Uterus (tissue), 4 donors: ENCODE measurements at regions of chr13 and their contacts with region 1.

Region 1: GRCh38 chr13:26785838-26786630 is 25.4 kb upstream of the GPR12 start:
- DNase-seq: no peak
- H3K4me3 ChIP-seq: no peak overlapping the region
- H3K27ac ChIP-seq: no peak overlapping the region
- H3K4me1 ChIP-seq: no peaks in the 10 kb centered on the region
- H3K27me3 ChIP-seq: no peaks in the 10 kb centered on the region
- CTCF ChIP-seq: no peak
- POLR2A ChIP-seq: no peak

Region 2: DNA sequence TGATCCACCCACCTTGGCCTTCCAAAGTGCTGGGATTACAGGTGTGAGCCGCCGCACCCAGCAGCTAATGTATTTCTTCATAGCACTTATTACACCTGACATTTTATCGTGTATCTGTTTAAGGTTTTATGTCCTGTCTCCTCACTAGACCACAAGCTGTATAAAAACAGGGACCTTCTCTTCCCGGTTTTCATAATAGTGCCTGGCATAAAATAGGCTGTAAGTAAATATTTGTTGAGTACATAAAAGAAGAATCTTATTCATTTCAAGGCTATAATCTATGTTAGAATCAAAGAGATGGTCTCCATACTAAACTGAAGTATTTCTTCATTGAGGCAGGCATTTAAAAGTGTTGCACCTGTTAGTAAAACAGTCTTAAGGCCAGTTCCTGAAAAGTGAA is 928.2 kb before region 1 on chr13:
- intact Hi-C with region 1: loop called (anchors 10 kb)
- DNase-seq: no peak
- H3K4me3 ChIP-seq: no peak overlapping the region
- H3K27ac ChIP-seq: no peak overlapping the region
- H3K4me1 ChIP-seq: no peaks in the 10 kb centered on the region
- H3K27me3 ChIP-seq: no peaks in the 10 kb centered on the region
- CTCF ChIP-seq: no peak
- POLR2A ChIP-seq: no peak

Region 3: GRCh38 chr13:26813321-26813979 is 27.4 kb after region 1 on chr13:
- intact Hi-C with region 1: no loop called
- DNase-seq: no peak
- H3K4me3 ChIP-seq: no peak overlapping the region
- H3K27ac ChIP-seq: no peak overlapping the region
- H3K4me1 ChIP-seq: no peaks in the 10 kb centered on the region
- H3K27me3 ChIP-seq: no peaks in the 10 kb centered on the region
- CTCF ChIP-seq: no peak
- POLR2A ChIP-seq: no peak